ENCODE measurements at regions of chr7 and their contacts with region 1.

Region 1: GRCh38 chr7:26090927-26091519 is 61.0 kb upstream of the NFE2L3 start:
- DNase-seq: peak; percentile 61

Region 2: GRCh38 chr7:26078437-26079336 is 12.3 kb before region 1 on chr7:
- CTCF ChIA-PET with region 1: interaction called, 16 read pairs
- POLR2A ChIA-PET with region 1: no interaction called
- DNase-seq: peak; percentile 77

Region 3: DNA sequence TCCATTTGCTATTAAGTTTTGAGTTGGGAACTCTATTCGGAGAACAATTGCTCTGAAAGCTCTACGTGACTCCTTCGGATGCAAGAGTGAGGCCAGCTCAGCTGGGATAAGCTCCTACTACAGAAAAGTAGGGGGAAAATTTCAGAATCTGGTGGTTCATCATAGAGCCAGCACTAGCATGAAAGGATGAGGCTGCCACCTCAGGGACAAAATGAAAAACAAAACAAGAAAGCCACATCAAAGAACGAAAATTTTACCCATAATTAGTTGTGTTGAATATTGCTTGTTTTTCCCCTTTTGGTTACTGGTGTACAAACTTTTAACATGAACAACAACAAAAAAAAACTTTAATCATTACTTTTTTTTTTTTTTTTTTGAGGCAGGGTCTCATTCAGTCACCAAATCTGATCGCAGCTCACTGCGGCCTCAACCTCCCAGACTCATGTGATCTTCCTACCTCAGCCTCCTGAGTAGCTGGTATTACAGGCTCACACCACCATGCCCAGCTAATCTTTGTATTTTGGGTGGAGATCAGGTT is 21.2 kb after region 1 on chr7:
- CTCF ChIA-PET with region 1: no interaction called
- POLR2A ChIA-PET with region 1: no interaction called
- DNase-seq: no peak